ENCODE measurements at regions of chr15 and their contacts with region 1.

Region 1: DNA sequence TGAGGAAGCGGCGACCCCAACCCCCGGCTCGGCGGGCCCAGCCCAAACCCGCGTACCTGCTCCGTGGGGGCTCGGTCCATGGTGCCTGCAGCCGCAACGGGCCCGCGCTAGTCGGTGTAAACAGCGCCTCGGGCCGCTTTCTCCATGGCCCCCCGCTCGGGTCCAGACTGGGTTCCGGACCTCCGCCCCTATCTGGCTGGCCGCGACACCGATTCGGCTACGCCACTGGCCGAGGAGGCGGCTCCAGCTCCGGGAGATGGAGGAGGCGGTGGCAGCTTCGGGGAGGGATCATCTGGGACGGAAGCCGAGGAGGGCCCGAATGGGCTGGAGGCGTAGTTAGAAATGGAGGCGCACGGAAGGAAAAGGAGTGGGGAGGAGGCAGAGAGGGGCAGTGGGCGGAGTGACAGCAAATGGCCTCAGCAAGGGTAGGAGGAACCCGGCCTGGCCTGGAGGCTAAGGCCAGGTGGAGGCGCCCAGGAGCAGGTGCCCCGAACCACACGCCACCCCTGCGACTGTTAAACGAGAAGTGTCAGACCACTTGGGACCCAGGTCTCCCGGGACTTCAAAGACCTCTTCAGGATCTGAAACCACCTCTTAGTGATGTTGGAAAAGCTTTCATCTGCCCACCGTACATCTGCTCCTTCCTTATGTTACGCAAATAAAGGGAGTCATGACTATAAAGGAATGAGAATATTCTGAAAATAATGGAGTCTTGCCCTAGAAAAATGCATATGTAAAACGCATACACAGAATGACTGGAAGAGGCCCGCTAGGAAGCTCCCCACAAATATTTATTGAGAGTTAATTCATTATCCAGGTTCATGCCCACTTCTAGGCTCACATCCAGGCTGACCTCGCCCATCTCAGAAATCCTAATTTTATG is at the start of gene SECISBP2L:
- DNase-seq: peak; percentile 93
- H3K4me3 ChIP-seq: peak within 1 kb of the TSS; percentile 80 to 97 (median 82)
- H3K27ac ChIP-seq: peak within 1 kb of the TSS; percentile 61
- H3K4me1 ChIP-seq: peaks cover 2% of the 10 kb centered on the region
- H3K27me3 ChIP-seq: no peaks in the 10 kb centered on the region
- CTCF ChIP-seq: peak; percentile 4 to 27
- total RNA-seq, gene SECISBP2L: 26.2 to 30.3 TPM

Region 2: GRCh38 chr15:48877630-48878595 is 168.5 kb before region 1 on chr15 and contains the start of gene EID1:
- CTCF ChIA-PET with region 1: no interaction called
- dilution Hi-C with region 1: loop called (anchors 5 kb)
- in situ Hi-C with region 1: no loop called
- intact Hi-C with region 1: no loop called
- DNase-seq: peak; percentile 95
- H3K4me3 ChIP-seq: peak within 1 kb of the TSS; percentile 47 to 96 (median 75)
- H3K27ac ChIP-seq: peak within 1 kb of the TSS; percentile 68
- H3K4me1 ChIP-seq: peaks cover 8% of the 10 kb centered on the region
- H3K27me3 ChIP-seq: no peaks in the 10 kb centered on the region
- CTCF ChIP-seq: no peak
- total RNA-seq, gene EID1: 84.6 to 147 TPM

Region 3: DNA sequence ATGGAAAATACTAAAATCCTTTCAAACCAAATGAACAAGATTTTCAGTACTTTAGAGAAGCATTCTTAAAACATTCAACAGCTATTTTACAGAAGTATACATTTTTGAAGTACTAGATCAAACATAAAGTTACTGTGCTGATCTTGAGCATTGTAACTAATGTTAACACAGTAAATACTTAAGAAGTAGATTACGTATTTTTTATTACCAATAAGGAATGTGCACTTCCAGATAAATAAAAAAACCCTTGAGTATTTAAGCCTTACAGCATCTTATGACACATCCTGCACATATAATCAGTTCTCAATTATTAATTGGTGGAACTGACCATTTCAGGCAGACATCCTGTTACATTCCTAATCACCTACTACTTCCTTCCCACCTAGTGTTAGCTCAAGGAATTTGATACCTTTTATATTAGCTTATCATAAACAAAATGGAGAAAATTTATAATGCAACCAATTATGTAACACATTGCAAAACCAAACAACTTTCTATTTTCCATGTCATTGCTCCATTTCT is 76.1 kb after region 1 on chr15:
- CTCF ChIA-PET with region 1: no interaction called
- dilution Hi-C with region 1: no loop called
- in situ Hi-C with region 1: no loop called
- intact Hi-C with region 1: loop called (anchors 1 kb)
- DNase-seq: no peak
- H3K4me3 ChIP-seq: no peak overlapping the region
- H3K27ac ChIP-seq: no peak overlapping the region
- H3K4me1 ChIP-seq: no peaks in the 10 kb centered on the region
- H3K27me3 ChIP-seq: no peaks in the 10 kb centered on the region
- CTCF ChIP-seq: no peak

Region 4: DNA sequence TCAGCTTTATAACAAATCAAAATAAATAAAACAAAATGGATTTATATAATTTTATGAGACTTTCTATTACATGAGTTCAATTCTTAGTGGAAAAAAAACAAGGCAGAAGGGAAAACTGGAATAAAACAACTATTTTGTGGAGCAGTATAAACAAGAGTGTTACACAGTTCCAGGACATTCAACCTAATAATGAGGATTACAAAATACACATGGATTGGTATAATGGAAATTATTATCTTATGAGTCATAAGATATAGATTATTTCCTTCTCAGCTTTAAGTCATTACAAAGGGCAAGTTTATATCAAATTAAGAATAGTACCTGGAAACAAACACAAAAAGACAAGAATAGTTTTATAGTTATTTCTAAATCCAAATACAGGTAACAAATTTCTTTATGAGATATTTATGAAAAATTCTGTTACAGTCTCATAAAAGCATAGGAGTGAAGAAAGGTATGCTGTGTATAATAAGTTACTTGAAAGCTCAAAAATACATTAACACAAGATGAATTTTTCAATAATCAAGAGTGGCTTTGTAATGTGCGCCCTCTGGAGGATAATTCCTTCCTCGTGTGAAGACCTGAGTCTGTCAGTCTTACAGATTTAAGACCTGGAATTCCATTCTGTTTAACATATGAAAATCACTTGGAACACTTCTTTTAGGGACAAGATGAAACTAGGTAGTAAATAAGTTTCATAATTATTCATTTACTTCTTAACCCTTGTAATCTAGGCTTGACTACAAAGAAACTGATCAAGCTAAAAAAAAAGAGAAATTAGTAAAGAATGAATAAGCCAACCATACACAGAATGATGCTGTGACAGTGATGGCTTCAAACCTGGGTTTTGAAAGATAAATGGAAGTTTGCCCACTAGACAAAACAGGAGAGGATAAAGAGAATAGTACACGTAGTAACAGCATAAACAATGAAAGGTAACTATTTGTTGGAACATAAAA is 99.5 kb after region 1 on chr15:
- CTCF ChIA-PET with region 1: no interaction called
- dilution Hi-C with region 1: no loop called
- in situ Hi-C with region 1: no loop called
- intact Hi-C with region 1: loop called (anchors 5 kb)
- DNase-seq: peak; percentile 52
- H3K4me3 ChIP-seq: peak overlapping the region in 1 of 3 experiments; percentile 17
- H3K27ac ChIP-seq: peak overlapping the region; percentile 15
- H3K4me1 ChIP-seq: no peaks in the 10 kb centered on the region
- H3K27me3 ChIP-seq: no peaks in the 10 kb centered on the region
- CTCF ChIP-seq: peak; percentile 69 to 79

Measured in mammary epithelial cell (primary cell).